Common myeloid progenitor, CD34-positive (primary cell): ENCODE measurements at regions of chr11 and their contacts with region 1.

Region 1: GRCh38 chr11:116879800-116880625 is 42.6 kb upstream of the APOA1 start:
- DNase-seq: peak; percentile 72 to 83 (median 80)
- H3K4me3 ChIP-seq: no peak overlapping the region
- H3K27ac ChIP-seq: no peak overlapping the region
- H3K4me1 ChIP-seq: peaks cover 0 to 19% (median 5%) of the 10 kb centered on the region in 4 experiments
- H3K27me3 ChIP-seq: no peaks in the 10 kb centered on the region

Region 2: DNA sequence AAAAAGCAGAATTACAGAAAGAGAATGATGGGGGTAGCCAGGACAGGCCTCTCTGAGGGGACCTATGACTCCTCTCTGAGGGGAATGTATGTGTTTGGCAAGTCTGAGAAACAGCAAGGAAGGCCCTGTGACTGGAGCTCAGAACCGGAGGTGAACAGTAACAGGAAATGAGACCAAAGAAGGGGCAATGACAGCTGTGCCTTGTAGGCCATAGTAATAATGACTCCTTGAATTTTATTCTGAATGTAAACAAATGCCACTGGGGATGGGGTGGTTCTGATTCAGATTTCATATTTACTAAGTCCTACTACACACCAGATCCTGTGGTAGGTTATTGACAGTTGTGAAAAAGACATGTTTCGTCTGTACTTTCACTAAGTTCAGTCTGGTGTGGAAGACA is 10.2 kb after region 1 on chr11:
- CTCF ChIA-PET with region 1: interaction called, 41 read pairs
- POLR2A ChIA-PET with region 1: no interaction called
- DNase-seq: peak; percentile 15 to 73 (median 65)
- H3K4me3 ChIP-seq: no peak overlapping the region
- H3K27ac ChIP-seq: peak overlapping the region; percentile 13 to 59
- H3K4me1 ChIP-seq: peaks cover 0 to 14% (median 7%) of the 10 kb centered on the region in 4 experiments
- H3K27me3 ChIP-seq: no peaks in the 10 kb centered on the region

Region 3: DNA sequence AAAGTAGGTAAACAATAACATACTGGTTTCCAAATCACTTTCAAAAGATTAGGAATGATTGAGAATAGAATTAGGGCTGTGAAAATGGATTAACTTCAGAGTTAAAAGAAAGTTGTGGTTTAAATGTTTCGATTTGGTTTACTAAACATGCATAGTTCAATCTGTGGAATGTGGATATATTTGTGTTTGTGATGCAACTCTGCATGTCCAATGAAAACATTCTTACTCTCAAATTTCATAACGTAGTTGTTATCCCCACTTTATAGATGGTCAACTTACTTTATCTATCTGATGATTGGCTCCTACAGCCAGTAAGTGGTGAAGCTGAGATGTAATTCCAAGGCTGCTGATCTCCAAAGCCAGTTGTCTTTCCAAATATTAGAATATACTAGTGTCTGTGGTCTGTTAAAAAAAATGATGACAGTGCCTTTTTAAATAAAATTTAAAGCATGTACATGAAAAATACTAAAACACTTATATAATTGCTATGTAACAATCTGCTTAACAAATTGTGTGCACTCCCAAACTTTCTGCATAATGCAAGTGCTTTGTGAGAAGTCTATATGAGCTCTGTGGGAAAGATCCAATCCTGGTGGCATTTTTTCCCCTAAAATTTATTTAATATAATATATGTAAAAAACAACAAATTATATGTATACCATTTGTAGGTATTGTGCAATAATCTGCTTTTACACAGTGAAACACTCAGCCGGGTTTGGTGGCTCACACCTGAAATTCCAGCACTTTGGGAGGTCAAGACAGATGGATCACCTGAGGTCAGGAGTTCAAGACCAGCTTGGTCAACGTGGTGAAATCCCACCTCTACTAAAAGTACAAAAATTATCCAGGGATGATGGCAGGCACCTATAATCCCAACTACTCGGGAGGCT is 227.9 kb after region 1 on chr11:
- CTCF ChIA-PET with region 1: interaction called, 31 read pairs
- POLR2A ChIA-PET with region 1: no interaction called
- DNase-seq: no peak
- H3K4me3 ChIP-seq: no peak overlapping the region
- H3K27ac ChIP-seq: no peak overlapping the region
- H3K4me1 ChIP-seq: no peaks in the 10 kb centered on the region
- H3K27me3 ChIP-seq: no peaks in the 10 kb centered on the region